CD8-positive, alpha-beta memory T cell (primary cell): ENCODE measurements at regions of chr12 and their contacts with region 1.

Region 1: DNA sequence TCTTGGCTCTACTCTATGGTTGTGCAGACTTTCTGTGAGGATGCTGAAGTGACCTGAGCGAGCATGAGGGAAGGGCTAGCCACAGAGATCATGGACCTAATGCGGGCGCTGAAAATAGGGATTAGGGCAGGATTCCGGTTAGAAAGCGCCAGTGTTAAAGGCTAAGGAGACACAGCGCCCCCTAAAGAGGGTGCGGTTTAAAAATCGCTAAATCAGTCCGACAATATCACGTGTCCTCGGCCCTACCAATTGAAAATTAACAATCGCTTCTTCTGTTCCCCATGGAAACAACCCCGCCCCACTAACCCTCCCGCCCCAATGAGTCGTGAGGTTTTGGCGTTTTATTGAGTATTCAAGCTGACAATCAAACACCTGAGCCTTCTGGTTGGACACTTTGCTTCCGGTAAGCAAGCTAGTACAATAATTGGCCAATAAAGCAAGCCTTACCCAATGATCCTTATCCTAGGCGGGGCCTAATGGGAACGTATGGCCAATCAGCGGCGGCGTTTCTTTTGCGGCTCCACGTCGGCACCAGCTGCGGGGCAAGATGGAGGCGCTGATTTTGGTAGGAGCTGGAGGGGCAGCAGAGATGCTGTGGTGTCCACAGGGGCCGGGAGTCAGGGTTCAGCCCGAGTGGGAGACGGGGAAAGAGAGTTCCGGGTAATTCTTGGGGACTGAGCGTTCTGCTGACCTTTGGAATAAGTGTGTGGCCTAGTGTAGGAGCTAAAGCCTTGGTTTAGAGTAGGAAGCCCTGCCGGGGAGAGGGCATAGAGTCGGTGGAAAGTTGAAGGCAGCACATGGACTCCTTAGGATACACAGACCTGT is at the start of gene COPZ1:
- DNase-seq: peak; percentile 87 to 97 (median 94)
- H3K4me3 ChIP-seq: peak within 1 kb of the TSS; percentile 97
- H3K4me3 Mint-ChIP-seq: peak within 1 kb of the TSS; percentile 93 to 100 (median 98)
- H3K27ac ChIP-seq: peak within 1 kb of the TSS; percentile 94
- H3K27ac Mint-ChIP-seq: peak within 1 kb of the TSS; percentile 92 to 100 (median 98)
- H3K4me1 ChIP-seq: peaks cover 25% of the 10 kb centered on the region
- H3K4me1 Mint-ChIP-seq: peaks cover 32 to 41% (median 37%) of the 10 kb centered on the region in 3 donors
- H3K27me3 ChIP-seq: no peaks in the 10 kb centered on the region
- H3K27me3 Mint-ChIP-seq: no peaks in the 10 kb centered on the region
- total RNA-seq, gene COPZ1: 112 to 115 TPM

Region 2: GRCh38 chr12:54251667-54252284 is 73.1 kb before region 1 on chr12:
- CTCF ChIA-PET with region 1: interaction called, 10 read pairs
- POLR2A ChIA-PET with region 1: no interaction called
- DNase-seq: peak in 2 of 5 donors; percentile 32 to 45
- H3K4me3 ChIP-seq: no peak overlapping the region
- H3K4me3 Mint-ChIP-seq: no peak overlapping the region
- H3K27ac ChIP-seq: no peak overlapping the region
- H3K27ac Mint-ChIP-seq: peak overlapping the region in 1 of 8 donors; percentile 26
- H3K4me1 ChIP-seq: no peaks in the 10 kb centered on the region
- H3K4me1 Mint-ChIP-seq: peaks cover 3 to 9% (median 7%) of the 10 kb centered on the region in 3 donors
- H3K27me3 ChIP-seq: no peaks in the 10 kb centered on the region
- H3K27me3 Mint-ChIP-seq: no peaks in the 10 kb centered on the region

Region 3: GRCh38 chr12:54262403-54262925 is 62.4 kb before region 1 on chr12:
- CTCF ChIA-PET with region 1: no interaction called
- POLR2A ChIA-PET with region 1: no interaction called
- DNase-seq: no peak
- H3K4me3 ChIP-seq: no peak overlapping the region
- H3K4me3 Mint-ChIP-seq: no peak overlapping the region
- H3K27ac ChIP-seq: peak overlapping the region; percentile 41
- H3K27ac Mint-ChIP-seq: peak overlapping the region in 1 of 8 donors; percentile 17
- H3K4me1 ChIP-seq: peaks cover 16% of the 10 kb centered on the region
- H3K4me1 Mint-ChIP-seq: peaks cover 17 to 25% (median 21%) of the 10 kb centered on the region in 3 donors
- H3K27me3 ChIP-seq: no peaks in the 10 kb centered on the region
- H3K27me3 Mint-ChIP-seq: no peaks in the 10 kb centered on the region

Region 4: DNA sequence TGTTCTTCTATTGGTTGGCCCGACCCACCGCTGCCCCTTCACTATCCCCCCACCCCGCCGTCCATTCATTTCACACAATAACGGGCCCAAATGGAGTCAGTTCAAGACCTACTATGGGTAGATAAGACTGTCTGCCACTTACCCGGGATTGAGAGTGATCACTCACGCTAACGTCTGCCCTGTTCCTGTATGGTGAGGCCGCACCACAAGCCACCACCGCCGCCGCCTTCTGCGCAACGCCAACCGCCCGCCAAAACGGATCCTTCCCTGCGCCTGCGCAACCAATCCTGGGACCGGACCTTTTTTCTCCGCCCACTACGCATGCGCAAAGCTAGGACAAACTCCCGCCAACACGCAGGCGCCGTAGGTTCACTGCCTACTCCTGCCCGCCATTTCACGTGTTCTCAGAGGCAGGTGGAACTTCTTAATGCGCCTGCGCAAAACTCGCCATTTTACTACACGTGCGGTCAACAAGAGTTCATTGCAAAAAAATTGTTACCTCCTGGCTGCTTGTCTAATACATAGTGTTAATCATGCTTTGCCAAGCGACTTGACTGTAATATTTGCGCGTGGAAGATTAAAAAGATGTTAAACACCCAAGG is 44.9 kb before region 1 on chr12 and contains the start of gene CBX5:
- CTCF ChIA-PET with region 1: interaction called, 15 read pairs
- POLR2A ChIA-PET with region 1: interaction called, 20 read pairs
- DNase-seq: peak; percentile 99 to 100 (median 100)
- H3K4me3 ChIP-seq: peak within 1 kb of the TSS; percentile 92
- H3K4me3 Mint-ChIP-seq: no peak within 1 kb of the TSS
- H3K27ac ChIP-seq: peak within 1 kb of the TSS; percentile 92
- H3K27ac Mint-ChIP-seq: no peak within 1 kb of the TSS
- H3K4me1 ChIP-seq: peaks cover 60% of the 10 kb centered on the region
- H3K4me1 Mint-ChIP-seq: peaks cover 17 to 46% (median 18%) of the 10 kb centered on the region in 3 donors
- H3K27me3 ChIP-seq: no peaks in the 10 kb centered on the region
- H3K27me3 Mint-ChIP-seq: no peaks in the 10 kb centered on the region
- total RNA-seq, gene CBX5: 82.0 to 87.8 TPM

Region 5: DNA sequence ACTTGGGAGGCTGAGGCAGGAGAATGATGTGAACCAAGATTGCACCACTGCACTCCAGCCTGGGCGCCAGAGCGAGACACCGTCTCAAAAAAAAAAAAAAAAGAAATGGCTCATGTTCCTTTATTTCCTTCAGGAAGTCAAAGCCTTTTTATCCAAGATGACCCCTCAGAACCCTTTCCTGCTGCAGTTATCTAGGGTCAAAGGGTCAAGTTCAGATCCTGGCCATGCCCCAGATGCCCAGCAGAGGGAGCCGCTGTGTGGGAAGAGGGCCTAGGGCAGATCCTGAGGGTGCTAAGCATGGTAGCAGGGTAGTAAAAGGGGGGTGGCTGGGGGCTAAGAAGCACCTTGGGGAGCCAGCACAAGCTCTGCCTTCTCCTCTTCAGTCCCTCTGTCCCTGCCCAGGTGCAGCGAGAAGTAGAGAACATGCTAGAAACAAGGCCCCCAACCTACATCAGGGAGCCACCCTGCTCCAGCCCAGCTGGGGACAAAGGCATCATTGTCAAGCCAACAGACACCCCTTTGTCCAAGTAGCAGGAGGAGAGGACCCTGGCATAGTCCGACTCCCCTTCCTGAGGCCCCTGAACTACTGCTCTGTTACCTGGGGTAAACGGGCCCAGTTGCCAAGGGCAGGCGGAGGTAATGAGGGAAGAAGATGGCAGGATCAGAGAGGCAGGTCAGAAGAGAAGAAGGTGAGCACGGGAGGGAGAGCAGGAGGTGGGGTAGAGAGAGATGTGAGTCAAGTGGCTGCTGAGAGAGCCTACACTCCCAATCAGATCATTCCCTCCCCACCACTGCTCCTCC is 30.5 kb before region 1 on chr12:
- CTCF ChIA-PET with region 1: interaction called, 10 read pairs
- POLR2A ChIA-PET with region 1: no interaction called
- DNase-seq: peak; percentile 32 to 68 (median 40)
- H3K4me3 ChIP-seq: no peak overlapping the region
- H3K4me3 Mint-ChIP-seq: no peak overlapping the region
- H3K27ac ChIP-seq: peak overlapping the region; percentile 80
- H3K27ac Mint-ChIP-seq: peak overlapping the region in 2 of 8 donors; percentile 47 to 74
- H3K4me1 ChIP-seq: peaks cover 3% of the 10 kb centered on the region
- H3K4me1 Mint-ChIP-seq: peaks cover 4 to 6% (median 6%) of the 10 kb centered on the region in 3 donors
- H3K27me3 ChIP-seq: no peaks in the 10 kb centered on the region
- H3K27me3 Mint-ChIP-seq: peaks cover 2 to 12% of the 10 kb centered on the region in 2 donors

Region 6: GRCh38 chr12:54337280-54337842 is 12.5 kb after region 1 on chr12:
- CTCF ChIA-PET with region 1: interaction called, 37 read pairs
- POLR2A ChIA-PET with region 1: interaction called, 5 read pairs
- DNase-seq: no peak
- H3K4me3 ChIP-seq: no peak overlapping the region
- H3K4me3 Mint-ChIP-seq: no peak overlapping the region
- H3K27ac ChIP-seq: peak overlapping the region; percentile 28
- H3K27ac Mint-ChIP-seq: peak overlapping the region in 2 of 8 donors; percentile 5 to 53
- H3K4me1 ChIP-seq: peaks cover 11% of the 10 kb centered on the region
- H3K4me1 Mint-ChIP-seq: peaks cover 20 to 52% (median 50%) of the 10 kb centered on the region in 3 donors
- H3K27me3 ChIP-seq: no peaks in the 10 kb centered on the region
- H3K27me3 Mint-ChIP-seq: no peaks in the 10 kb centered on the region

Region 7: GRCh38 chr12:54359033-54359761 is 34.4 kb after region 1 on chr12:
- CTCF ChIA-PET with region 1: interaction called, 13 read pairs
- POLR2A ChIA-PET with region 1: interaction called, 7 read pairs
- DNase-seq: peak; percentile 89 to 97 (median 94)
- H3K4me3 ChIP-seq: peak overlapping the region; percentile 80
- H3K4me3 Mint-ChIP-seq: no peak overlapping the region
- H3K27ac ChIP-seq: peak overlapping the region; percentile 71
- H3K27ac Mint-ChIP-seq: no peak overlapping the region
- H3K4me1 ChIP-seq: peaks cover 23% of the 10 kb centered on the region
- H3K4me1 Mint-ChIP-seq: peaks cover 8 to 13% (median 11%) of the 10 kb centered on the region in 3 donors
- H3K27me3 ChIP-seq: no peaks in the 10 kb centered on the region
- H3K27me3 Mint-ChIP-seq: peaks cover 0 to 2% of the 10 kb centered on the region in 2 donors

Region 8: GRCh38 chr12:54749191-54749818 is 424.5 kb after region 1 on chr12:
- CTCF ChIA-PET with region 1: no interaction called
- POLR2A ChIA-PET with region 1: no interaction called
- DNase-seq: peak in 4 of 5 donors; percentile 20 to 57 (median 42)
- H3K4me3 ChIP-seq: no peak overlapping the region
- H3K4me3 Mint-ChIP-seq: peak overlapping the region in 6 of 7 donors; percentile 10 to 73 (median 60)
- H3K27ac ChIP-seq: no peak overlapping the region
- H3K27ac Mint-ChIP-seq: peak overlapping the region in 3 of 8 donors; percentile 6 to 64 (median 22)
- H3K4me1 ChIP-seq: peaks cover 16% of the 10 kb centered on the region
- H3K4me1 Mint-ChIP-seq: peaks cover 15 to 24% (median 23%) of the 10 kb centered on the region in 3 donors
- H3K27me3 ChIP-seq: no peaks in the 10 kb centered on the region
- H3K27me3 Mint-ChIP-seq: peaks cover 0 to 6% of the 10 kb centered on the region in 2 donors